Pancreas (tissue), 10 donors: ENCODE measurements at regions of chr17 and their contacts with region 1.

Region 1: GRCh38 chr17:55601874-55602364 is 90.7 kb upstream of the SMIM36 start:
- DNase-seq: no peak
- ATAC-seq: peak in 1 of 4 donors; percentile 54
- H3K4me3 ChIP-seq: no peak overlapping the region
- H3K27ac ChIP-seq: no peak overlapping the region
- H3K4me1 ChIP-seq: no peaks in the 10 kb centered on the region
- H3K27me3 ChIP-seq: peaks cover 0 to 6% (median 0%) of the 10 kb centered on the region in 4 donors
- CTCF ChIP-seq: peak in 2 of 4 donors; percentile 23 to 25

Region 2: DNA sequence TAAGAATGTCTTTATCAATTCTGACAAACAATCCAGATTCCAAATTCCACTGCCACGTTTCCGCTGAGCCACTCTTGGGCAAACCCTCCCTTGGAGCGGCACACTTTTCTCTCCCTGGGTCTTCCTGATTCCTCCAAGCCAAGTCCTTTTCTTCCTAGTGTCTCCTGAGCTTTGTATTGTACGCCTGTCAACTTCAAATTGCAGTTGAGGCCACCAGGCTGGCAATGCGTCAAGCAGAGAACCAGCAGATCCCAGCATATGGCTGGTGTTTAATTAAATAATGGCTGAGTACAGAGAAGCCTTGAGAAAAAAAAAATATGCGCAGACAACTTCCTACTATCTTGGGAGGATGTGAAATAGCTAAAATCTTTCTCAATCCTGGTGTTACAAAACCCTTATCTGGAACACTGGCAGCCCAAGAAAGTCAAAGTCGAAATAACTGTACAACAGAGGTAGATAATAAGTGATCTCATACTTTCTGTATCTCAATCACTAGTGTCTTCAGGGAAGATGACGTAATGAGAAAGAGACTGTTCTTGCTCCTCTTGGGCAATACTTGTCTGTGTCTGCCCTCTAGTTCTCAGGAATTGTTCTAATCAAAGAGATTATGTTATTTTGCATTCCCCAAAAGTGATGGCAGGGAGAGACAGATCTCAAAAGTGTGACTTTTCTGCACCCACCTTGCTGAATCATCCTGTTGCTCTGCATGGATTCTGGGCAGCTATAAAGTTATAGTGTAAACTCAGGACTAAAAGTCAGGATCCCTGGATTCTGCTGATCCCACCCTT is 105.6 kb before region 1 on chr17:
- intact Hi-C with region 1: no loop called
- DNase-seq: no peak
- ATAC-seq: peak in 3 of 4 donors; percentile 50 to 73 (median 52)
- H3K4me3 ChIP-seq: no peak overlapping the region
- H3K27ac ChIP-seq: peak overlapping the region in 1 of 4 donors; percentile 29
- H3K4me1 ChIP-seq: no peaks in the 10 kb centered on the region
- H3K27me3 ChIP-seq: no peaks in the 10 kb centered on the region
- CTCF ChIP-seq: no peak

Region 3: GRCh38 chr17:55533608-55534007 is 68.3 kb before region 1 on chr17:
- intact Hi-C with region 1: loop called in 1 of 3 experiments (anchors 10 kb)
- DNase-seq: no peak
- ATAC-seq: no peak
- H3K4me3 ChIP-seq: no peak overlapping the region
- H3K27ac ChIP-seq: no peak overlapping the region
- H3K4me1 ChIP-seq: no peaks in the 10 kb centered on the region
- H3K27me3 ChIP-seq: no peaks in the 10 kb centered on the region
- CTCF ChIP-seq: no peak

Region 4: GRCh38 chr17:55549140-55549539 is 52.8 kb before region 1 on chr17:
- intact Hi-C with region 1: loop called in 1 of 3 experiments (anchors 10 kb)
- DNase-seq: no peak
- ATAC-seq: no peak
- H3K4me3 ChIP-seq: no peak overlapping the region
- H3K27ac ChIP-seq: no peak overlapping the region
- H3K4me1 ChIP-seq: no peaks in the 10 kb centered on the region
- H3K27me3 ChIP-seq: no peaks in the 10 kb centered on the region
- CTCF ChIP-seq: no peak